ENCODE measurements at regions of chr10 and their contacts with region 1.

Region 1: DNA sequence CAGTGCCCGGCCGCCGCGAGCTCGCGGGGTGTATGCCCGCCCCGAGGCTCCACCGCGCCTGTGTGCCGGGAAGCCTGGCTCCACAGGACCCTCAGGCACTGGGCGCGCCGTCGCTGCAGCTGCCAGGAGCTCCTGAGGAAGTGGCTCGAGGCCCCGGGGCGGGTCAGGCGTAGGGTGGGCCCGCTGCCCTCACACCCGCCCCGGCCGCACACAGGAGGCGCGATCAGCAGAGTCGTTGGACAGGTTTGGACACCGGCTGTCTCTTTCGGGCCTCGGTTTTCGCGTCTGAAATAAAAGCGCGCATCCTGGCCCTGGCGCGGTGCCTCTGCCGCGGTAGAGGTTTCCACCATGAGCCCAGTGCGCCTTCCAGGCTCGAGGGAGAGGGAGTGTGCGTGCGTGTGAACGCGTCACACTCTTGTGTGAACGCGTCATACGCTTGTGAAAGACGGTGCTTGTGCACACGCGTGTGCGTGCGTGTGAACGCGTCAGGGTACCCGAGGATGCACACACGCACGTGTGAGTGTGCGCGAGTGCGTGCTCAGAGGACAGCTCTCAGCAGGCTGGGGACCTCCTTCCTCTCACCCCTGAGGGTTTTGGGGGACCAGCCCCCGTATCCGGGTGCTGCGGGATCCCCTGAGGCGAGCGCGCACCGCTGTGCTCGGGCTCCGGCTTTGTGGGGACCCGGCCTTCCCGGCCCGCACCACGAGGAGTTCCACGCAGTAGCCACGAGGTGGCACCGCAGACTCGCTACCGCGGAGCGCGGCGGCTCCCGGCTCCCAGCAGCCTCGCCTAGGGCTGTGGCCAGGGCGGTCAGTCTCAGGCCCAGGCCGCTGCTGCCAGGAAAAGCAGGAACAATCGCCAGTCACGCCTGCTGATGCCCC is 83.8 kb downstream of the BMS1 start:
- DNase-seq: peak; percentile 3
- H3K4me3 ChIP-seq: peak overlapping the region; percentile 32
- CTCF ChIP-seq: peak; percentile 82

Region 2: GRCh38 chr10:42795701-42796100 is 70.7 kb before region 1 on chr10:
- CTCF ChIA-PET with region 1: no interaction called
- POLR2A ChIA-PET with region 1: no interaction called
- DNase-seq: no peak
- H3K4me3 ChIP-seq: no peak overlapping the region
- CTCF ChIP-seq: no peak

Region 3: GRCh38 chr10:43105102-43105785 is 238.9 kb after region 1 on chr10:
- CTCF ChIA-PET with region 1: interaction called, 49 read pairs
- POLR2A ChIA-PET with region 1: no interaction called
- DNase-seq: no peak
- H3K4me3 ChIP-seq: peak overlapping the region; percentile 61
- CTCF ChIP-seq: peak; percentile 100

Region 4: GRCh38 chr10:43110338-43111086 is 244.2 kb after region 1 on chr10:
- CTCF ChIA-PET with region 1: interaction called, 49 read pairs
- POLR2A ChIA-PET with region 1: no interaction called
- DNase-seq: no peak
- H3K4me3 ChIP-seq: no peak overlapping the region
- CTCF ChIP-seq: no peak

Measured in AG04449 (cell line).